ENCODE measurements at regions of chr15 and their contacts with region 1.

Region 1: DNA sequence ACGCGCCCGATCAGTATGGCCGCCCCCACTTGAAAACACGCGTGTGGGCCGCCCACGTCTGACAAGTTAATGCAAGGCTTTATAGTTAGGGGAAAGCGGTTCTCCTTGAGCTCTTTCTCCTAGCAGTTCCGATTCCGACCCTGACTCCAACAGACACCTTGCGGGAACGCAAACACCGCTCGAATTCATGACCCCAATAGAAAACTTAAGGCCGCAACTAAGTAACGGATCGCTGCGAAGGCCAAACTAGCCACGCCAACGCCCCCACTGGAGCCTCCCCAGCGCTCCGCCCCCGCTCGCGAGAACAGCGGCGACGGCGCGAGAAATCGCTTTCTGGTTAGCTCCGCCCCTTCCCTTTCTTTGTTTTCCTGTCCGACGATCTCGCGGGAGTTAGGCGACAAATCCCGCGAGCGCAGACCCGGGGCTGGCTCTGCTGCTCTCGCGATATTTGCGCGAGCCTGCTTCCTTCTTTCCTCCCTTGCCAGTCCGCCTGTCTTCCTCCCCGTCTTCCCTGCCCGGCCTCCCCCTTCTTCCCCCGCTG is at the start of gene IREB2:
- DNase-seq: peak; percentile 90 to 98 (median 97)
- H3K4me3 ChIP-seq: peak within 1 kb of the TSS; percentile 71 to 100 (median 96)
- H3K27ac ChIP-seq: peak within 1 kb of the TSS; percentile 70 to 98 (median 95)
- H3K27me3 ChIP-seq: no peaks in the 10 kb centered on the region
- CTCF ChIP-seq: peak in 40 of 56 donors; percentile 3 to 62 (median 29)
- total RNA-seq, gene IREB2: 33.8 to 90.3 (median 60.4) TPM

Region 2: GRCh38 chr15:78299101-78299930 is 138.5 kb before region 1 on chr15 and contains the start of gene SKIC8:
- intact Hi-C with region 1: loop called in 1 of 2 experiments (anchors 1 kb)
- DNase-seq: peak; percentile 73 to 93 (median 86)
- H3K4me3 ChIP-seq: peak within 1 kb of the TSS; percentile 71 to 99 (median 93)
- H3K27ac ChIP-seq: peak within 1 kb of the TSS in 55 of 59 donors; percentile 0 to 91 (median 70)
- H3K27me3 ChIP-seq: peaks cover 0 to 8% (median 0%) of the 10 kb centered on the region in 45 donors
- CTCF ChIP-seq: peak in 32 of 56 donors; percentile 10 to 53 (median 30)
- total RNA-seq, gene SKIC8: 28.0 to 79.8 (median 56.5) TPM

Region 3: GRCh38 chr15:78506971-78507830 is 69.4 kb after region 1 on chr15 and contains the start of gene HYKK:
- intact Hi-C with region 1: no loop called
- DNase-seq: peak; percentile 63 to 93 (median 89)
- H3K4me3 ChIP-seq: peak within 1 kb of the TSS; percentile 62 to 97 (median 85)
- H3K27ac ChIP-seq: peak within 1 kb of the TSS in 15 of 59 donors; percentile 8 to 66 (median 31)
- H3K27me3 ChIP-seq: no peaks in the 10 kb centered on the region
- CTCF ChIP-seq: peak in 21 of 56 donors; percentile 6 to 36 (median 15)
- total RNA-seq, gene HYKK: 2.2 to 11.8 (median 6.6) TPM

Region 4: DNA sequence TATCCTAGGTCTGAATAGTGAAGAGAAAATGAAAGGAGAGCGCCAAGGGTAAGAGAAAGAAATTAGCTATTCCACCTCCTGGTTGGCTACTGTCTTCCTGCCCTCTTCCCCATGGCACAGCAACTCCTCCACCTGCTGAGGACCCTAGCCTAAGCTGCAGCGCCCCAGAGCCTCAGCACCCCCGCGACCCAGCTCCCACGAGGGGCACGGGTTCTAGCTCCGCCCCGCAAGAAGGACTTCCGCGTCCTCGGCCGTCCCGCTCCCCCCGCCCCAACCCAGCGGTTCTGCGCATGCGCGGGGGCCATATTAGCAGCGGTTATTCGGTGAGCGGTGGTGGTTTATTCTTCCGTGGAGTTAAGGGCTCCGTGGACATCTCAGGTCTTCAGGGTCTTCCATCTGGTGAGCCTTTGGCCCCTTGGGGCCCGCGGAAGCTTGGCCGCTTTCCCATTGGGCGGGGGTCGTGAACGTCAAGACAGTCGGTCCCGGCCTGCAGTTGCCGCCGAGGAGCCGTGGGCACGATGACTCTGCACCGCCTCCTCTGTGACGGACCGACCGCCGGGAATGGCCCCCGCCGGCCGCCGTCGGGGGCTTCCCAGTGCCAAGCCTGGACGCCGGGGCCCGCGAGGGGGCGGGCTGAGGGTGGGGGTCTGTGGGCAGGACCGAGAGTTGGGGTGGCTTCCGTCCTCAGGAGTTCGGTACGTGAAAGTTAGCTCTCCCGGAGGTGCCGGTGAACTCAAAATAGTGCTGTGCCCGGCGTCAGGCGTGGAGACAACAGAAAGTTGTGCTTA is 102.5 kb after region 1 on chr15 and contains the start of gene PSMA4:
- intact Hi-C with region 1: loop called (anchors 2 to 5 kb)
- DNase-seq: peak; percentile 82 to 93 (median 88)
- H3K4me3 ChIP-seq: peak within 1 kb of the TSS; percentile 57 to 98 (median 87)
- H3K27ac ChIP-seq: peak within 1 kb of the TSS; percentile 71 to 99 (median 96)
- H3K27me3 ChIP-seq: no peaks in the 10 kb centered on the region
- CTCF ChIP-seq: peak in 46 of 56 donors; percentile 5 to 63 (median 34)
- total RNA-seq, gene PSMA4: 40.4 to 112 (median 82.1) TPM

Measured in dorsolateral prefrontal cortex (tissue), 120 donors.